ENCODE measurements at regions of chr19 and their contacts with region 1.

Region 1: DNA sequence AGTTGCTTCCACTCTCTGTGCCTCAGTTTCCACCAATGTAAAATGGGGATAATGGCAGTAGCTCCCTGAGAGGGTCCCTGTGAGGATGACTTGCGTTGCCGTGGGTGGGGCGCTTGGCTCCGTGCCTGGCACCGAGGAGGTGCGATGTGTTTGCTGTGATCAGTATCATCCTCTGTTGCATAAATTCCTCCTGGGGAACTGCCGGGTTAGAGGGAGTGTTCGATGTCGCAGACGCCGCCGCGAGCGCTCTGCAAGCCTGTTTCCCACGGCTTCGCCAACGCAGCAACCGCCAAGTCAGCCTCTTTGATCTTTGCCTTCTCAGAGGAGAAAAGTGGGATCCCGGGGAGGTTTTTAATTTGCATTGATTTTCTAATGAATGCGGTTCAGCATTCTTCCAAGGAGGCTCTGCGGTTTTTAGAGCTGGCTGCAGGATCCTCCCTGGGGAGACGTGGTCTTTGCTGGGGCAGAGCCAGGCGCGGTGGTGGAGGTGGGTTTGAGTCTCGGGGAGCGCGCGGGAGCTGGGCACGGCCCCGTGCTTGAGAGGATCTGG is 7.6 kb downstream of the GPR32 start:
- DNase-seq: no peak
- ATAC-seq: no peak; the same call in 1 of the 2 replicates
- H3K4me3 ChIP-seq: peak overlapping the region; percentile 4; the same call in 1 of the 2 replicates
- H3K27ac ChIP-seq: no peak overlapping the region
- H3K4me1 ChIP-seq: no peaks in the 10 kb centered on the region
- H3K27me3 ChIP-seq: peaks cover 71% of the 10 kb centered on the region
- CTCF ChIP-seq: no peak

Region 2: DNA sequence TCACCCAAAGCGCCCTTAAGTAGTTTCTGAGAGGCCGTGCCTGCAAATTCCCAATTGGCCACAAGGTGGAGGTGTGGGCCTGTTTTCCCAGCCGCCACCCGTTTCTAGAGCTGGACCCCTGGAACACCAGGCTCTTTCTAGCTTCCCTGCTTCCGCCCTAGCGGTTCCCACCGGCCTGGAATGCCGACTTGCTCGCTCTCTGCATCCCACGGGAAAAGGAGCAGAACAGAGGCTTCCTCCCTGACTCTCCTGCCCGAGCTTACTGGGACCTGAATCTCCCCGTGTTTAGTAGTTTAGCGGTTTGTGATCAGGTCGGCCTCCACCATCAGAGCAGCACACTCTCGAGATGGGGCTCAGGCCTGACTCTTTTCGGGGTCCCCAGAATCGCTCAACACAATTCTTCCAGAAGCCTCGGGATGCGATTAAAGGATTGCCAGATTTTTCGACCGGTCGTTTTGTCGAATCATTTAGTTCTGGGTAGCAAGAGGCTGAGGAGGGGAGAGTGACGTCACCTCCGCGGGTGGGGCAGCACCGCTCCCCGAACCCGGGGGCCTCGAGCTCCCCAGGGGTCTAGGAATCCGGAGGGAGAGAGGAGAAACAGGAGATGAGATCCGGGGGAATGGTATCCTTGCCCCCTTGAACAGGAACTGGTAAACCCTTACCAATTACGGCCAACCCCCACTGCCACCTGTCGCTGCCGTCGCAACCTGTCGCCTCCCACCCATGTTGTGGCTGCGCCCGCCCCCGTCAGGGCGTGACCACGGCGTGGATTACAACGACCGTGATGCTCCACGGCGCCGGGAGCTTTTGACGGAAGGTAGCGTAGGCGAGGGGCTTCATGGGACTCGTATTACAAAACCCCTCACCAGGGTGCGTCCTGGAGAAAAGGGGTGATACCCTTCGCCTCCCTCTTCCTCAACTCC is 420.4 kb before region 1 on chr19:
- CTCF ChIA-PET with region 1: no interaction called
- POLR2A ChIA-PET with region 1: no interaction called
- intact Hi-C with region 1: loop called (anchors 1 kb)
- DNase-seq: peak; percentile 82
- ATAC-seq: peak; percentile 84
- H3K4me3 ChIP-seq: peak overlapping the region; percentile 60
- H3K27ac ChIP-seq: no peak overlapping the region
- H3K4me1 ChIP-seq: no peaks in the 10 kb centered on the region; the same call in 1 of the 2 replicates
- H3K27me3 ChIP-seq: no peaks in the 10 kb centered on the region
- CTCF ChIP-seq: peak; percentile 89

Region 3: DNA sequence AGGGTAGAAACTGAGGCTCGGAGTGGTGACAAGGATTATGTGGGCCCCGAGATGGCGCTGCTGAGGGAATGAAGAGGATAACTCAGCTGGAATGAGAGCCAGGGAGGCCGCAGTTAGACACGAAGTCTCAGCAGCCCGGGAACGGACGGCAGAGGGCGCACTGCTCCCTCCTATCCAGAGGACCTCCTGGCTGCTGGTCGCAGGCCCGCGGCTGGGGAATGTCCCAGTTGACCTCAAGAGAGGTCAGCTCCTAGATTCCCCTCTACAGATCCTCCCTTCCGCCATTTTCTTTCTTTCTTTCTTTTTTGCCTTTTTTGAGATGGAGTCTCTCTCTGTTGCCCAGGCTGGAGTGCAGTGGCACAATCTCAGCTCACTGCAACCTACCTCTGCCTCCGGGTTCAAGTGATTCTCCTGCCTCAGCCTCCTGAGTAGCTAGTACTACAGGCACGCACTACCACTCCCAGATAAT is 240.0 kb before region 1 on chr19:
- CTCF ChIA-PET with region 1: interaction called, 13 read pairs
- POLR2A ChIA-PET with region 1: no interaction called
- intact Hi-C with region 1: loop called (anchors 5 kb)
- DNase-seq: peak; percentile 90
- ATAC-seq: peak; percentile 98
- H3K4me3 ChIP-seq: no peak overlapping the region
- H3K27ac ChIP-seq: no peak overlapping the region
- H3K4me1 ChIP-seq: no peaks in the 10 kb centered on the region
- H3K27me3 ChIP-seq: peaks cover 6% of the 10 kb centered on the region; the same call in 1 of the 2 replicates
- CTCF ChIP-seq: peak; percentile 98

Region 4: DNA sequence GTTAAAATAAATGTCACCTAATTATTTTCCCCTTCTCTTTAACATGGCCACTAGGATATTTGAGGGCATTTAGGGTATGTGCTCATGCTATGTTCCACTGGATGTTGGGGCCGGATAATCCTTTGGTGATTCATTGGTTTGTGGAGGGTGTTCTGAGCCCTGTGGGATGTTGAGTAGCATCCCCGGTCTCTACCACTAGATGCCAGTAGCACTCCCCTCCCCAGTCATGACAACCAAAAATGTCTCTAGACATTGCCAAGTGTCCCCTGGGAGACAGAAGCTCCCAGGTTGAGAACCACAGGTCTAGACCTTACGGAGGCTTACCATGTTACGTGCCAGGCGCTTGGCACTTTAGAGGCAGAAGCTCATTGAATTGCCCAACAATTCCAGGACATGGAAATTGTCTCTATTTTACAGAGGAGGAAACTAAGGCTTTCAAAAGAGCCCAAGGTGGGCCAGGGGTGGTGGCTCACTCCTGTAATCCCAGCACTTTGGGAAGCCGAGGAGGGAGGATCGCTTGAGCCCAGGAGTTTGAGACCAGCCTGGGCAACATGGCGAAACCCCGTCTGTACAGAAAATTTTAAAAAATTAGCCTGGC is 72.3 kb before region 1 on chr19:
- CTCF ChIA-PET with region 1: interaction called, 4 read pairs
- POLR2A ChIA-PET with region 1: no interaction called
- intact Hi-C with region 1: loop called (anchors 1 kb)
- DNase-seq: peak; percentile 86
- ATAC-seq: peak; percentile 87
- H3K4me3 ChIP-seq: no peak overlapping the region
- H3K27ac ChIP-seq: no peak overlapping the region
- H3K4me1 ChIP-seq: peaks cover 15% of the 10 kb centered on the region
- H3K27me3 ChIP-seq: peaks cover 19% of the 10 kb centered on the region
- CTCF ChIP-seq: peak; percentile 89

Region 5: GRCh38 chr19:50922317-50922853 is 144.6 kb after region 1 on chr19:
- CTCF ChIA-PET with region 1: no interaction called
- POLR2A ChIA-PET with region 1: no interaction called
- intact Hi-C with region 1: loop called (anchors 1 kb)
- DNase-seq: peak; percentile 96
- ATAC-seq: peak; percentile 100
- H3K4me3 ChIP-seq: peak overlapping the region; percentile 36; the same call in 1 of the 2 replicates
- H3K27ac ChIP-seq: no peak overlapping the region
- H3K4me1 ChIP-seq: peaks cover 26% of the 10 kb centered on the region
- H3K27me3 ChIP-seq: peaks cover 11% of the 10 kb centered on the region
- CTCF ChIP-seq: peak; percentile 98

Measured in PC-3 (cell line).